ENCODE measurements at regions of chr19 and their contacts with region 1.

Region 1: GRCh38 chr19:10946964-10947657 is 13.7 kb upstream of the SMARCA4 start:
- DNase-seq: no peak
- ATAC-seq: no peak
- H3K4me3 Mint-ChIP-seq: no peak overlapping the region
- H3K27ac Mint-ChIP-seq: no peak overlapping the region
- H3K4me1 Mint-ChIP-seq: peaks cover 6% of the 10 kb centered on the region
- H3K27me3 Mint-ChIP-seq: no peaks in the 10 kb centered on the region

Region 2: DNA sequence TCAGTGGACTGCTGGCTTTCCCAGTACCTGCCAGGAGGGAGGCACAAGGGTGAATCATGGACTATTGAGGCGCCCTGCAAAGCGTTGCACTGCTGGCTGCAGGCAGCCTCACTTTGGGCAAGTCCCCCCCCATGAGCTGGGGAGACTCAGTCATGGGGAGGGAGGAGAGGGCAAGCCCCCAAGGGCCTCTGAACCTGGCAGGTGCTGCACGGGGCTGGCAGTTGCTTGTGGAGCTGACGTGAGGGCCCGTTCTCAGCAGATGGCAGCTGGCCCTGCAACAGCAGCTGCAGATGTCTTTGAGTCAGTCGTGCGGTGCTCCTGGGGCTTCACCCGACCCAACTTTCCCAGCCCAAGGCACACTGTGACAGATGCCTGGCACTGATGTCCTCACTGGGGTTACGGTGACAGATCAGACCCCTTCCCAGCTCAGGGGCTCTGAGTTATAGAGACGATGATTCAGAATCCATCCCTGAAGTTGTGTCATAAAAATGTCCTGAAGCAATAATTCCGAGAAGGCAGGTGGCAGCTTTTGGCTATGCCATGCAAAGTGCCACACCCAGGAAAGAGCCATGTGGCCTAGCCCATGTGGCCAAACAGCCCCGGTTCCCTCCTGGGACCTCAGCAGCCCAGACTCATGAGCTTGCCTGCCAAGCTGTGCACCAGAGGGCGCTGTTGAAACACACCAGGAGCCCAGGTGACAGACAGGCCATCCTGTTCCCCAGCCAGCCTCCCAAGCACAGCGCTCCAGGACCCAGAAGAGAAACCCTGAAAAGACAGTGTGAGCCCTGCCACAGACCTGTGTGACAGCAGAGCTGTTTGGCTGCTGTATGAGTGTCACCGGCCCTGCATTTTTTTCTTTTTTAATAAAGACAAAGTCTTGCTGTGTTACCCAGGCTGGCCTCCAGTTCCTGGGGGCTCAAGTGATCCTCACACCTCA is 88.6 kb after region 1 on chr19:
- CTCF ChIA-PET with region 1: interaction called, 14 read pairs
- POLR2A ChIA-PET with region 1: no interaction called
- intact Hi-C with region 1: loop called in 1 of 2 experiments (anchors 2 kb)
- DNase-seq: peak; percentile 94
- ATAC-seq: peak; percentile 99
- H3K4me3 Mint-ChIP-seq: no peak overlapping the region
- H3K27ac Mint-ChIP-seq: peak overlapping the region; percentile 9
- H3K4me1 Mint-ChIP-seq: peaks cover 6% of the 10 kb centered on the region
- H3K27me3 Mint-ChIP-seq: no peaks in the 10 kb centered on the region

Measured in activated CD4-positive, alpha-beta T cell treated with anti-CD3 and anti-CD28 coated beads for 36 hours (primary cell).